ENCODE measurements at regions of chr14 and their contacts with region 1.

Region 1: DNA sequence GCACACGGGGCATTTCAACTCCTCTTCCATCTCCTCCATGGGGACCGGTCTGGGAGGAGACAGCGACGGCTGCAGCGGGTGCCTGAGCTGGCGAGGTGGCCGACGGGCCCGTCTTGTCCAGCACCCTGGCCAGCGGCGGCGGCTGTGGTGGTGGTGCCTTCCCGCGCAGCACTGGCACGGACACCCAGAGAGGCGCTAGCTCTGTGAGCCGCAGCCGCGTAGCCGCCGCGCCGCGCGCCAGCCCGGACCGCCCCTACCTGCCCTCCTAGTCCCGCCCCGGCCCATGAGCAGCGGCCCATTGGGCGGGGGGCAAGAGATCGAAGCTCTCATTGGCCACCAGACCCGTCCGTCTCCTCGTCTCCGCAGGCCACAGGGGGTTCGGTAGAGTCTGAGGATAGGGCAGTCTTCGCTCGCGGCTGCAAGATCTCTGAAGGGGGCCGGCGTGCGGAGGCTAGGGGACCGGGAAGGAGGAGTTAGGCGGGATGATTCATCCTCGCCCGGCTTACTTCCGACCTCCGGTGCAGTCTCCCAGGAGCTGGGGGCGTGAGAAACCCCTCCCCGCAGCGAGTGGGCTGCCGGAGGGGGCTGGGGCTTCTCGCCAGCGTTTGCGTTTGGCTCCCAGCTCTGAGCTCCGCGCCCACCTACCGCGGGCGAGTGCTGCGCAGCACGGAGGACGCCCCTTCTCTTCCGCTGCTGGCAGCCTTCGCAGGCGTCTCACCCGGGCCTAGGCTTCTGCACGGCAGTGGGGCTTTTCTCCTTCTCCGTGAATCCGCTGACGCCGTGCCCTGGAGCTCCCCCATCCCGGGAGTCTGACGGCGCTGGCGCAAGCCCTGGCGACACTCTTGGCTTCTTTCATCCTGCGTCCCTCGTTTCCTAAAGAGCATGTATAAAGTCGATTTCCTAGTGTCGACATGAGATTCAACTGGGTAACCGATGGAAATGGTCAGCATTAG is at the start of gene TRIM9:
- DNase-seq: peak; percentile 95
- H3K4me3 Mint-ChIP-seq: peak within 1 kb of the TSS; percentile 86
- H3K27ac Mint-ChIP-seq: peak within 1 kb of the TSS; percentile 65
- H3K4me1 Mint-ChIP-seq: peaks cover 12% of the 10 kb centered on the region
- H3K27me3 Mint-ChIP-seq: peaks cover 13% of the 10 kb centered on the region
- total RNA-seq, gene TRIM9: 0.76 to 1.1 TPM

Region 2: GRCh38 chr14:49585803-49586672 is 1509.1 kb before region 1 on chr14 and contains the start of gene RPS29:
- CTCF ChIA-PET with region 1: no interaction called
- intact Hi-C with region 1: loop called (anchors 2 kb)
- DNase-seq: peak; percentile 99
- H3K4me3 Mint-ChIP-seq: peak within 1 kb of the TSS; percentile 87
- H3K27ac Mint-ChIP-seq: peak within 1 kb of the TSS; percentile 98
- H3K4me1 Mint-ChIP-seq: peaks cover 40% of the 10 kb centered on the region
- H3K27me3 Mint-ChIP-seq: peaks cover 3% of the 10 kb centered on the region
- total RNA-seq, gene RPS29: 1,858 to 2,382 TPM

Region 3: GRCh38 chr14:50954811-50955372 is 140.3 kb before region 1 on chr14:
- CTCF ChIA-PET with region 1: interaction called, 5 read pairs
- intact Hi-C with region 1: loop called (anchors 1 kb)
- DNase-seq: no peak
- H3K4me3 Mint-ChIP-seq: no peak overlapping the region
- H3K27ac Mint-ChIP-seq: no peak overlapping the region
- H3K4me1 Mint-ChIP-seq: peaks cover 6% of the 10 kb centered on the region
- H3K27me3 Mint-ChIP-seq: no peaks in the 10 kb centered on the region

Region 4: GRCh38 chr14:51219473-51220448 is 124.6 kb after region 1 on chr14:
- CTCF ChIA-PET with region 1: interaction called, 7 read pairs
- intact Hi-C with region 1: loop called (anchors 1 kb)
- DNase-seq: no peak
- H3K4me3 Mint-ChIP-seq: no peak overlapping the region
- H3K27ac Mint-ChIP-seq: no peak overlapping the region
- H3K4me1 Mint-ChIP-seq: no peaks in the 10 kb centered on the region
- H3K27me3 Mint-ChIP-seq: peaks cover 5% of the 10 kb centered on the region

Region 5: DNA sequence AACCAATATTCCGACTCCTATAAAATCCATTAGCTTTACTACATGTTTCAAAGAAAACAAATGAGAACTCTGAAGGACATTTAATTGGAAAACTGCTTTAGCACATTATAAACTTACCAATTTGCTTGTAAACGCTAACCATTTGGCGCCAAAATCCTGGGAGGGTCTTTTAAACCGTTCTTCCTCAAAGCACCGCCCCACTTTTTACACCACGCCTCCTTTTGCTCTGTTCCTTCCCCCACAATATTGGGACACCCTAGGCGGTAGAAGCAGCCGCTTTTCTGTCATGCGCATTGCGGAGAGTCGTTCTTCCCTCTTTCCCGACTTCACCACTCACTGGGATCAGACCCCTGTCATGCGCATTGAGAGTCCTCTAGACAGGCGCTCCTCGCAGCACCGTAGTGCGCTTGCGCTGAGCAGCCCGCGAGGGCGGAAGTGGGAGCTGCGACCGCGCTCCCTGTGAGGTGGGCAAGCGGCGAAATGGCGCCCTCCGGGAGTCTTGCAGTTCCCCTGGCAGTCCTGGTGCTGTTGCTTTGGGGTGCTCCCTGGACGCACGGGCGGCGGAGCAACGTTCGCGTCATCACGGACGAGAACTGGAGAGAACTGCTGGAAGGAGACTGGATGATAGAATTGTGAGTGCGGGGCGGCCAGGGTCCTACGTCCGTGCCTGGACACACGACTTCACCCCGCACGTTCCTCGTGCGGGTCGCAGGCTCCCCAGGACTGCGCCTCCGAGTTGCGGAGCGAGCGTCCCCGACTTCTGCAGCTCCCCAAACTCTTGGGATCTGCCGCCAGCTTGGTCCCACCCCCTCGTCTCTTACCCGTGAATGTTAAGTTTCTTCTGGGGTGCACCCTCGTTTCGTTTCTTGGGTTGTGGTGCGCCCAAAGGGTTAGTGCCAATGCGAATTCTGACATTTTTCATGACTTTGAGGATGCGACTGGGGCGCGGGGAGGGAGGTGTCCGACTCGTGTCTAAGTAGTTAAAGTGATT is 144.9 kb after region 1 on chr14 and contains the start of gene TMX1:
- CTCF ChIA-PET with region 1: interaction called, 12 read pairs
- intact Hi-C with region 1: loop called (anchors 1 kb)
- DNase-seq: peak; percentile 95
- H3K4me3 Mint-ChIP-seq: no peak within 1 kb of the TSS
- H3K27ac Mint-ChIP-seq: no peak within 1 kb of the TSS
- H3K4me1 Mint-ChIP-seq: peaks cover 28% of the 10 kb centered on the region
- H3K27me3 Mint-ChIP-seq: no peaks in the 10 kb centered on the region
- total RNA-seq, gene TMX1: 59.4 to 59.6 TPM

Region 6: GRCh38 chr14:51677266-51677665 is 582.1 kb after region 1 on chr14:
- CTCF ChIA-PET with region 1: no interaction called
- intact Hi-C with region 1: loop called (anchors 1 kb)
- DNase-seq: no peak
- H3K4me3 Mint-ChIP-seq: no peak overlapping the region
- H3K27ac Mint-ChIP-seq: no peak overlapping the region
- H3K4me1 Mint-ChIP-seq: peaks cover 21% of the 10 kb centered on the region
- H3K27me3 Mint-ChIP-seq: peaks cover 8% of the 10 kb centered on the region

Region 7: DNA sequence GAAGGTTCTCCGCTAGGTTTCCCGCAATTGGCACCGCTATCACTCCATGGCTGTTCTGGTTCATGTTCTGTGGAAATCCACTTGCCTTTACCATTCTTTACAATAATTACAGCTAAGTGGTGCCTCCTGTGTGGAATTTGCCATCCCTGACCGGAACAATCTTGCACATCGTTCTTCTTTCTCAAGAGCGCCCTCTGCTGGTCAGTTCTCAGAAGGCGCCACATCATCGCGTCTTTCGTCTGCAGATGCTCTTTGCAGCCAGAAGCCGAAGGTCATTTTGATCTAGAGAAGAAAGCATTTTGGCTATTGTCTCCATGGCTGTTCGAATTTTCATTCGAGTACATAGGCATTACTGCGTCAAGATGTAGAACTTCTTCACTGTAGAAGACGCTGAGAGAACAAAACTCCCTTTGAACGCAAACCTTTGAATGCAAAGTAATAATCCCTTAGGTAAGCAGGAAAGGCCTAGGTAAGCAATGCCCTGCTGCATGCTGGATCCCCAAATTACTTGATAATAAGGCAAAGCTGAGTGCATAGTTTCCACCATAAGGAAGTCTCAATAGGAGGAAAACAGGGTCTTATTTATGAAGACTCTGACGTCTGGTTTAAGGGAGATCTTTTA is 884.0 kb after region 1 on chr14:
- CTCF ChIA-PET with region 1: no interaction called
- intact Hi-C with region 1: loop called (anchors 5 kb)
- DNase-seq: peak; percentile 91
- H3K4me3 Mint-ChIP-seq: no peak overlapping the region
- H3K27ac Mint-ChIP-seq: no peak overlapping the region
- H3K4me1 Mint-ChIP-seq: peaks cover 4% of the 10 kb centered on the region
- H3K27me3 Mint-ChIP-seq: no peaks in the 10 kb centered on the region

Measured in activated naive CD4-positive, alpha-beta T cell treated with anti-CD3 and anti-CD28 coated beads for 36 hours (primary cell).